AG04450 (cell line): ENCODE measurements at regions of chr3 and their contacts with region 1.

Region 1: DNA sequence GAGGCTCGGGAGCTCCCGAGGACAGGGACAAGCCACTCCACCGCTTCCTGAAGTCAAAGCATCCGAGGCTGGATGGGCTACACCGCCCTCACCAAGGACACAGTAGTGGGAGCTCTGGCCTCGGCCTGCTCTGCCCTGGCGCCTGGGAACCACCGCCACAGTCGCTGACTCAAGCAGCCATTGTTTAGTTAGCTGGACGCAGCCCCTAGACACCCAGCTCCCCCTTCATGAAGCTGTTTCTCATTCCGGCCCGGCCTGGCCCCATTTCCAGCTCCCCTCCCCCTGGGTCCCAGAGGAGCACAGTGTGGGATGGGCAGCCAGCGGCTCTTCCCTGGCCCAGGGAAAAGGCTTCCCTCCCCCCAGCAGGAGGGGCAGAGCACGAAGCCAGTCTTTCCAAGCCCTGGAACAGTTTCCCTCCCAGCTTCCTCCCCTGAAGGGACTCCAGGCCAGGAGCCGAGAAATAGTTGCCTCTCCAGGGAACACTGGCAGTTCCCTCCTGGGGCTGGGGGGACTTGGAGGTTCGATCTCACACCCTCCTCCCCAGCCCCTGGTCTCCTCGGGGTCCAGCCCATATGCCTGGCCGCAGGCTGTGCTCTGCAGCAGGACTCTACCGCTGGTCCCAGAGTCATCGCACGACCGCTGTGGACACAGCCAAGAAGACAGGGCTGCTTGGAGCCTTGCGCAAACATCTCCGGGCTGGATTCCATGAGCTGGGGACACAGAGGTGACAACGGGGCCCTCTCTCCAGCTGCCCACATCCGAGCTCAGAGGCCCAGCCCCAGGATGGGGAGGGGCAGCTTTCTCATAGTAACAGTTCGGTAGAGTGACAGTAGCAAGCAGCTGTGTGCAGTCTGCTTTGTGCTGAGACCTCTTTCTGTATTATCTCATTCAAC is 10.0 kb downstream of the PLXND1 start:
- DNase-seq: peak; percentile 77
- H3K4me3 ChIP-seq: peak overlapping the region; percentile 10; the same call in 1 of the 2 replicates
- H3K27ac ChIP-seq: peak overlapping the region; percentile 94
- H3K27me3 ChIP-seq: no peaks in the 10 kb centered on the region
- CTCF ChIP-seq: no peak

Region 2: GRCh38 chr3:129336093-129336709 is 260.2 kb before region 1 on chr3:
- CTCF ChIA-PET with region 1: no interaction called
- POLR2A ChIA-PET with region 1: no interaction called
- DNase-seq: no peak
- H3K4me3 ChIP-seq: no peak overlapping the region
- H3K27ac ChIP-seq: no peak overlapping the region
- H3K27me3 ChIP-seq: peaks cover 9% of the 10 kb centered on the region
- CTCF ChIP-seq: no peak

Region 3: GRCh38 chr3:129560901-129561594 is 35.4 kb before region 1 on chr3:
- CTCF ChIA-PET with region 1: no interaction called
- POLR2A ChIA-PET with region 1: interaction called, 12 read pairs
- DNase-seq: peak; percentile 36
- H3K4me3 ChIP-seq: peak overlapping the region; percentile 39
- H3K27ac ChIP-seq: peak overlapping the region; percentile 92
- H3K27me3 ChIP-seq: no peaks in the 10 kb centered on the region
- CTCF ChIP-seq: no peak

Region 4: DNA sequence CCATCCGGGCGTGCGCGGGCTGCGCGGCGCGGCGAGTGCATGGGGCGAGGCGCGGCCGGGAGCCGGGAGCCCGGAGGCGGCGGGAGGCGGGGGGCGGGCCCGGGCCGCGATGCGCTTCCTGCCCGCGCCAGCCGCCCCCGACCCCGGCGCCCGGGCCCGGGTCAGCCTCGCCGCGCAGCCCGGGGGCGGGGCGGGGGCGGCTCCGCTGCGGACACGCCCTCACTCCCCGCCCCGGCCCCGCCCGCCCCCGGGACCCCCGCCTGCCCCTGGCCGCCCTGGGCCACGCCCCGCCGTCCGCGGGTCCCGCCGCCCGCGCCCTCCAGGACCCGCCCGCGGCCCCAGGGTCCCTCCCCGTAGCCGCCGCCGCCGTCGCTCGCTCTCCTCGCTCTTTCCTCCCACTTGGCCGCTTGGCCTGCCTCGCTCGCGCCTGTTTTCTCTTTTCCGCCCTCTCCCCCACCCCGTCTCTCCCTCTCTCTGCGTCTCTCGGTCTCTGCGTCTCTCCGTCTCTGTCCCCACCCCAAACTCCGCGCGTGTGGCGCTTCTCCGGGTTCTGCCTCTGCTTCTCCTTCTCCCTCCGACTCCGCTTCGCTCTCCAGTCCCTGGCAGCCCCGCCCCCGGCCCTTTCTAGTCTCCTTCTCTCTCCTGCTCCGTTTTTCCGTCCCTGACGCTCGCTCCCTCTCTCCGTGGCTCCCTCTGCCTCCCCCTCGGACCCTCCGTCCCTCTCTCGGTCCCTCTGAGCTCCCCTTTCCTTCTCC is 10.4 kb after region 1 on chr3 and contains the start of gene PLXND1:
- CTCF ChIA-PET with region 1: interaction called, 3 read pairs
- POLR2A ChIA-PET with region 1: interaction called, 18 read pairs
- DNase-seq: no peak
- H3K4me3 ChIP-seq: peak within 1 kb of the TSS; percentile 66
- H3K27ac ChIP-seq: no peak within 1 kb of the TSS
- H3K27me3 ChIP-seq: no peaks in the 10 kb centered on the region
- CTCF ChIP-seq: no peak
- polyA plus RNA-seq, gene PLXND1: 37.1 and 47.7 TPM in 2 replicates